ENCODE measurements at regions of chr5 and their contacts with region 1.

Region 1: GRCh38 chr5:43484106-43484849 is 613 bp upstream of the TMEM267 start:
- DNase-seq: peak; percentile 86
- ATAC-seq: peak; percentile 62
- H3K4me3 Mint-ChIP-seq: peak overlapping the region; percentile 98
- H3K27ac Mint-ChIP-seq: peak overlapping the region; percentile 100
- H3K4me1 Mint-ChIP-seq: peaks cover 34% of the 10 kb centered on the region
- H3K27me3 Mint-ChIP-seq: no peaks in the 10 kb centered on the region

Region 2: DNA sequence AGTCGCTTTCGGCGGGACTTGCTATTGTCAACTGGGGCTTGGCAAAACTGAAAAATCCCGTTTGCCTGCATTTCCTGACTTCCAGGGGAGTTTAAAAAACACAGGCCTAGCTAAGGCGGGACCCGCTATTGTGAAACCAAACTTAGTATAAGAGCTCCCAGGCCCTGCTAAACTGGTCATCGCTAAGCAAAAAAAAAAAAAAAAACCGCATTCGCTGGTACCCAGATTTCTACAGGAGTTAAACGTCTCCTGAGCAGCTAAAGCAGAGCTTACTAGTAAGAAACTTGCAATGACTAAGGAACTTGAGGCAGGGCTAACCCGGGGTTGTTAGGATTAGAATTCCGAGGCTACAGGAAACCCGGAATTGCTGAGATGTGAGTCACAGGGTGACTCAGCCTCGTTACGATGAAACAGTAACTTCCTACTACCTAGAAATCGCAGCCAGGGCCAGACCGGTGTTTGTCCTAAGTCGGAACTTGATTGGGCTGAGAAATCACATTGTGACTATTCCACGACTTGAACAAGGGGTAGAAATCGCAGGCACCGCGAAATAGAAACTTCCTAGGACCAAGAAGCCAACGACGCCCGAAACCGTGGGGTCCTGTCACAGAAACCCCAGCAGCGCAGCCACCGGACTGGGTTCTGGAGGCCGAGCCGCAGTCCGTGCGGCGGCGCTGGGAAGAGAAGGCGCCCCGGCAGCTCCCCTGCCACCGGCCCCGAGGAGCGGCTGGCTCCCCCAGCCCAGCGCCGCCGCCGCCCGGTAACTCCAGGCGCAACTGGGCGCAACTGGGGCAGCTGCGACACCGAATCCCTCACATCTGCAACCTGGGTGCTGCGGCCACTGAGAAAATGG is 533.6 kb before region 1 on chr5:
- POLR2A ChIA-PET with region 1: interaction called, 15 read pairs
- DNase-seq: peak; percentile 35
- ATAC-seq: peak; percentile 38
- H3K4me3 Mint-ChIP-seq: peak overlapping the region; percentile 96
- H3K27ac Mint-ChIP-seq: peak overlapping the region; percentile 100
- H3K4me1 Mint-ChIP-seq: peaks cover 20% of the 10 kb centered on the region
- H3K27me3 Mint-ChIP-seq: no peaks in the 10 kb centered on the region

Region 3: DNA sequence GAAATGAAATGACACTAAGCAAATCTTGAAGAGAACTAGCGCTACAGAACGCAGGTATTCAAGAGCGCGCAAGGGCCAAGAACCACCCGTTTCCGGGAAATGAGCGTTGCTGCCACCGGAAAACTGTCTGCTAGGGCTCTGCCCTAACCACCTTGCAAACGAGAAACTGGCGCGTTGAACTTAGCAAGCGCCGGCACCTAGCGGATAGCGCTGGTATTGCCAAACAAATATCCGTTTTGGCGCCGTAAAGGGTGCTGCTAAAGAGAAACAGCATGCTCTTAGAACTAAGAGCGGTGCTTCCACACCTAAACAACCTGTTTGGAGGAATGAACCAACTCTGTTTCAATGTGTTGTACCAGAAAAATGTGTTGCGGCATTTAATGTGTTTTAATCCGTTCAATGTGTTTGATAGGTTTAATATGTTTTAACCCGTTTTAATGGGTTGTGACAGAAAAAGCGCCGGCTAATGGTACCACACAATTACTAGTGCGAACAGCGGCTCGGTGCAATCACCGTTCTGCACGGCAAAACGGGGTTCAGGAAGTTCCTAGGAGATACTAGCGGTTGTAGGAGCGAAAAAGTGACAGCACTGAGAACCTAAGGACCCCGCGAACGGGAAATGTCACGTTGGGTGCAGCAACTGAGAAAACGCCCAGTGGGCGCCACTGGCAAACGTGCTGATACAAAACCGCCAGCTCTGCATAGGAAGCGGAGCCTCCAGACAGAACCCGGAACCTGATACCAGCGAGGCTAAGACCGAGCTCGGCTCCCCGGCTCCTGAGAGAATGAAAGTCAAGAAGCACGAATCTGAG is 443.8 kb before region 1 on chr5 and contains the start of gene ANXA2R:
- POLR2A ChIA-PET with region 1: interaction called, 36 read pairs
- DNase-seq: peak; percentile 87
- ATAC-seq: peak; percentile 48
- H3K4me3 Mint-ChIP-seq: peak within 1 kb of the TSS; percentile 93
- H3K27ac Mint-ChIP-seq: peak within 1 kb of the TSS; percentile 99
- H3K4me1 Mint-ChIP-seq: peaks cover 34% of the 10 kb centered on the region
- H3K27me3 Mint-ChIP-seq: no peaks in the 10 kb centered on the region
- total RNA-seq, gene ANXA2R: 39.2 to 41.1 TPM

Region 4: DNA sequence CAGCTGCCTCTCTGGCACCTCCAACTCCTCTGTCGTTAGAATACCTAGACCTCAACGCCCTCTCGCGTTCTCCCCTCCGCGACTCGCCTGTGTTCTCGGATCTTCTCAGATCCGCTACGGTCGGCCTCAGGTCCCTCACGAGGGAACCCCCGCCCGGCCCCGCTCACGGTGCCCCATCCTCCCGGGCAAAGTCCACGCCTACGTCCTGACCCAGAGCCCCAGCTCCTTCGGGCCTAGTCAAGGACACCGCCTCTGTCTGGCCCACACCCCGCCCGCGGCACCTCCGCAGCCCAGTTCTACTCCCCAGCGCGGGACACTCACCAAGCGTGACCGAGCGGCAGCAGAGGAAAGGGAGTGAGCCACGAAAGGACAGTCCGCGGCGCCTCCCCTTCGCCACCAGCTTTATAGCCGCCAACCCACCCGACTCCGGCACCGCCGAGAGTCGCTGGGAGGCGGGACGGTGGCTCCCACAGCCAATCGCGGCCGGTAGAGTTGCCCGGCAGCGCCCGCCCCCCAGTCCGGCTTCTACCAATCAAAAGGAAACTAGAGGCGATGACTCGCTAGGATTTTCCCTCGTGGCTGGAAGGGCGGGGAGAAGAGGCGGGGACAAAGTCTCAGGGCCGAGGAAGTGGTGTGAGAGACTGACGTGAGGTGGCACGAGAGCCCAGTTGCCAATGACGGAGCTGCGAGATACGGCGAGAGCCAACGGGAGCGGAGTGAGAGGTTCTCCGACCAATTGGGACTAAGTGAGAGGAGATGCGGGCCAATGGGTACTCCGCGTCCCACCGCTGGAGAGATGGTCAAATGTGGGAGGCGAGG is 171.0 kb before region 1 on chr5 and contains the start of gene HMGCS1:
- POLR2A ChIA-PET with region 1: interaction called, 34 read pairs
- DNase-seq: peak; percentile 96
- ATAC-seq: peak; percentile 96
- H3K4me3 Mint-ChIP-seq: peak within 1 kb of the TSS; percentile 100
- H3K27ac Mint-ChIP-seq: peak within 1 kb of the TSS; percentile 93
- H3K4me1 Mint-ChIP-seq: peaks cover 31% of the 10 kb centered on the region
- H3K27me3 Mint-ChIP-seq: no peaks in the 10 kb centered on the region
- total RNA-seq, gene HMGCS1: 46.9 to 51.8 TPM

Region 5: DNA sequence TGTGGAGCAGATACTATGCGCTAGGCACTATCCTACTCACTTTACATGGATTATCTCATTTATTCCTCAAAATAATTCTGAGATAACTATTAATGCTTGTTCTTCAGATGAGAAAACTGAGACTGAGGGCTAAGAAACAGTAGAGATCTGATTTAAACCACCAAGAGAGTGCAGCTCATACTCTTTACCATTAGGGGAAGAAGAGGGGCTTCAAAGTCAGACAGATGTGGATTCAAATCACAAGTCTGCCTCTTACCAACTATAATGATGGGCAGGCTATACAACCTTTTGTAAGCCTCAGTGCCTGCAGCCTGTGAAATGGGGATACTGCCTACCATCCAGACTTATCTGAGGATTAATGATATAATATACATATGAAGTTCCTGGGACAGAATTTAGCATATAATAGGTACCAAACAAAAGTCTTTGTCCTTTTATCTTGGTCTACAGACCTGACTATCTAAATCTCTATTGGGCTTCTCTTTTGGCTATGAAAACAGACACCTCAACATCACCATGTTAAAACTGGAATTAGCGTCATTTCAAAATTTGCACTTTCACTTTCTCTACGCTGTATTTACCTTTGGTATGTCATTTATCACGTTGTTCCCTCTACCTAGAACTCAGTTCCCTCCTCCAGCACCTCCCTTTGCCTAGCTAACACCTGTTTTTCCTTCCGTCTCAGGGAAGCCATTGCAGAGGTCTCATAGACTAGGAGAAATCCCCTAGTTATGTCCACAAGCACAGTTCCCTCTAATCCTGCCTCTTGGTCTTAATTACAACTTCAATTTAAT is 13.2 kb after region 1 on chr5:
- POLR2A ChIA-PET with region 1: interaction called, 10 read pairs
- DNase-seq: no peak
- ATAC-seq: no peak
- H3K4me3 Mint-ChIP-seq: no peak overlapping the region
- H3K27ac Mint-ChIP-seq: no peak overlapping the region
- H3K4me1 Mint-ChIP-seq: peaks cover 6% of the 10 kb centered on the region
- H3K27me3 Mint-ChIP-seq: no peaks in the 10 kb centered on the region

Region 6: DNA sequence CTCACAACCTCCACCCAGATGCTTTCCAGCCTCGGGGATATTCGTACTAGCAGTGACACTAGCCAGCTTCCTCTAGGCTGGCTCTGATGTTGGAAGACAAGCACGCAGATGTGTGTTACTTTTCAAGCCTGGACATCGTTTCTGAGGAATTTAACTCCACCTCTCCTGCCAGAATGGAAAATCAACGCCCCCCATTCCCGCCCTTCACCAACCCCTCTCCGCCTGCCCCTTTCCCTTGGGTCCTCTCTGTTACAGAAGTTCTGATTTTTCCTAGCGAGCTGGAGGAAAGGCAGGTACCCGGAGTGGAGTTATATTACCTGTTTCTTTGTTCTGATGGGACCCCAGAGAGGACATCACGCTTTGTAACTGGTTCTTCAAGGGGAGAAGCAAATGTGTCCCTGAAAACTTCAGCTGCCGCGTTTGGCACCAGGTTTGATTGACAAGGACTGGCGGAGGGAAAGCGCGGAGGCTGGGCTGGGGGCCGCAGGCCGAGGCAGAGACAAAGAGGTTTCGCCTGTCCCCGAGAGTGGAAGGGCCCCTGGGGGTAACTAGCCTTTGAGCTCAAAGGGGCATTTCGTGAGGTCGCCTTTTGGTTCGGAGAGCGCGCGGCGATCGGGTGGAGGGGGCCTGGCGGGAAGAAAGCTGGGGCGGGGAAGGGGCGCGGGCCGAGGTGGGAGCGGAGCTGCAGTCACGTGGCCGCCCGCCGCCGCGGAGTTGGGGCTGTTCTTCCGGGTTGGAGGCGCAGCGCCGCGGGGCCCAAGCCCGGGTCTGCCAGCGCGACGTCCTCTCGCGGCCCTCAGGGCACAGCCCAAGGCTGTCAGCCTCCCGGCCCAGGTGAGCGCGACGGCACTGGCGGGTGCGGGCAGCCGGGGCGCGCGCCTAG is 118.4 kb after region 1 on chr5 and contains the start of gene NNT:
- POLR2A ChIA-PET with region 1: interaction called, 56 read pairs
- DNase-seq: peak; percentile 86
- ATAC-seq: peak; percentile 87
- H3K4me3 Mint-ChIP-seq: peak within 1 kb of the TSS; percentile 93
- H3K27ac Mint-ChIP-seq: peak within 1 kb of the TSS; percentile 90
- H3K4me1 Mint-ChIP-seq: peaks cover 28% of the 10 kb centered on the region
- H3K27me3 Mint-ChIP-seq: no peaks in the 10 kb centered on the region
- total RNA-seq, gene NNT: 97.5 to 108 TPM

Region 7: GRCh38 chr5:43785198-43785597 is 300.9 kb after region 1 on chr5:
- POLR2A ChIA-PET with region 1: no interaction called
- DNase-seq: no peak
- ATAC-seq: no peak
- H3K4me3 Mint-ChIP-seq: no peak overlapping the region
- H3K27ac Mint-ChIP-seq: no peak overlapping the region
- H3K4me1 Mint-ChIP-seq: no peaks in the 10 kb centered on the region
- H3K27me3 Mint-ChIP-seq: peaks cover 3% of the 10 kb centered on the region

Measured in activated naive CD8-positive, alpha-beta T cell treated with anti-CD3 and anti-CD28 coated beads, Interleukin-2, amount 10 ng/mL, durations not matched to agents 7 days and 5 days (primary cell).